CD4-positive, alpha-beta memory T cell (primary cell): ENCODE measurements at regions of chr10 and their contacts with region 1.

Region 1: GRCh38 chr10:23516530-23516929 is 77.7 kb downstream of the OTUD1 start:
- DNase-seq: no peak
- H3K4me3 ChIP-seq: no peak overlapping the region
- H3K4me3 Mint-ChIP-seq: no peak overlapping the region
- H3K27ac ChIP-seq: no peak overlapping the region
- H3K27ac Mint-ChIP-seq: no peak overlapping the region
- H3K4me1 ChIP-seq: no peaks in the 10 kb centered on the region
- H3K4me1 Mint-ChIP-seq: no peaks in the 10 kb centered on the region
- H3K27me3 ChIP-seq: peaks cover 6% of the 10 kb centered on the region
- H3K27me3 Mint-ChIP-seq: peaks cover 10 to 25% of the 10 kb centered on the region in 2 donors

Region 2: DNA sequence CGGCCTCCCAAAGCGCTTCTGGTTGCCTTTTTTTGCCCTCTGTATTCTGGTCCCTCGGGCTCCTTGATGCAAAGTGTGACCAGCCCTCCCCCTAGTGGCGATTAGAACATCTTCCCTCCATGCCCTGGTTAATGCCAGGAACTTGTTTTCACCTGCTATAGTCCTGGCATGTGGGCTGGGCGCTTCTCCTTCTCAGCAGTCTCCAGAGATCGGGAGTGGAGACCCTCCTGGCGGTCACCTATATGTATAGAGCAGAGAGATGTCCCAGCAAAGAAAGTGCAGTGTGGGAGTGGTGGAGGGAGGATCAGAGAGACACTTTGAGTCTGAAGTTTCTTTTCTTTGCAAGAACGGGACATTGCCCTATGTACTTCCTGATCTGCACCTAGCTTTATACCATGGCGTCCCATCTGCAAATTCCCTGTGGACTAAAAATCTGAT is 186.5 kb after region 1 on chr10:
- CTCF ChIA-PET with region 1: no interaction called
- POLR2A ChIA-PET with region 1: no interaction called
- intact Hi-C with region 1: loop called (anchors 1 kb)
- DNase-seq: peak; percentile 42 to 49 (median 44)
- H3K4me3 ChIP-seq: no peak overlapping the region
- H3K4me3 Mint-ChIP-seq: peak overlapping the region in 2 of 8 donors; percentile 27 to 32
- H3K27ac ChIP-seq: no peak overlapping the region
- H3K27ac Mint-ChIP-seq: no peak overlapping the region
- H3K4me1 ChIP-seq: no peaks in the 10 kb centered on the region
- H3K4me1 Mint-ChIP-seq: peaks cover 0 to 2% (median 0%) of the 10 kb centered on the region in 4 donors
- H3K27me3 ChIP-seq: no peaks in the 10 kb centered on the region
- H3K27me3 Mint-ChIP-seq: peaks cover 15 to 17% of the 10 kb centered on the region in 2 donors

Region 3: DNA sequence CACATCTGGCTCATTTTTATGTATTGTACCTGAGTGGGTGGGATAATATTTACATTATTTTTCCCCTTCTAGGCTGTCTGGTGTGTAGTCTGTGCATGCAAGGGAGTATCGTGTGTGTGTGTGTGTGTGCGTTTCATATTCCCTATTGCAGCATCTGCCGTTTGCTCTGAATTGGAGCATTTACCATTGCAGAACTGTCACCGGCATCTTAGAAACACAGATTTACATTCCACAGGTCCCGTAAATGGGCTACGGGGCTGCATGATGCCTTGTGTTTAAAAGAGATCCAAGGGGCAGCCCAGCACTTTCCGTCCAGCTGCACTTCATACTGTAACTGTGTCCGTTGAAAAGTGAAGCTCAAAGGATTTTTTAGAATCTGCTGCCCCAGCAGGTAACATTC is 525.3 kb after region 1 on chr10:
- CTCF ChIA-PET with region 1: no interaction called
- POLR2A ChIA-PET with region 1: no interaction called
- intact Hi-C with region 1: no loop called
- DNase-seq: no peak
- H3K4me3 ChIP-seq: no peak overlapping the region
- H3K4me3 Mint-ChIP-seq: no peak overlapping the region
- H3K27ac ChIP-seq: no peak overlapping the region
- H3K27ac Mint-ChIP-seq: no peak overlapping the region
- H3K4me1 ChIP-seq: no peaks in the 10 kb centered on the region
- H3K4me1 Mint-ChIP-seq: no peaks in the 10 kb centered on the region
- H3K27me3 ChIP-seq: no peaks in the 10 kb centered on the region
- H3K27me3 Mint-ChIP-seq: peaks cover 0 to 1% of the 10 kb centered on the region in 2 donors

Region 4: DNA sequence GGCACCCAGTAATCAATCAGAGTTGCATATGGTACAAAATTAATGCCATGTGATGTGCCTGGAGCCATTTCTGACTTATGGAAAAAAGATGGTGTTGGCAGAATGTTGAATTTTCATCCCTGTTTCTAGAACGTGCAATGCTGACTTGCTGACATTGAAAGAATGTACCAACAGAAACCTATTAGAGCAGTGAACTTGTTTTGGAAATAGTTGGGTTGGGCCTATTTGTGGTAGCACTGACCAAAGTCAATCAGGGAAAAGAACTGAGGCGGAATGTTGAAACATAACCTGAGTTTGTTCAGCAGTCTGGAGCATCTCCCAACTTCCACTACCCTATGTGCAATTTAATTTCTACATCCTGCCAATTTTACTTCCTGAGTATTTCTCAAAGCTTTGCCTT is 680.7 kb after region 1 on chr10:
- CTCF ChIA-PET with region 1: no interaction called
- POLR2A ChIA-PET with region 1: no interaction called
- intact Hi-C with region 1: loop called (anchors 5 kb)
- DNase-seq: no peak
- H3K4me3 ChIP-seq: no peak overlapping the region
- H3K4me3 Mint-ChIP-seq: no peak overlapping the region
- H3K27ac ChIP-seq: no peak overlapping the region
- H3K27ac Mint-ChIP-seq: no peak overlapping the region
- H3K4me1 ChIP-seq: no peaks in the 10 kb centered on the region
- H3K4me1 Mint-ChIP-seq: no peaks in the 10 kb centered on the region
- H3K27me3 ChIP-seq: no peaks in the 10 kb centered on the region
- H3K27me3 Mint-ChIP-seq: no peaks in the 10 kb centered on the region